HCT116 (cell line): ENCODE measurements at regions of chr1 and their contacts with region 1.

Region 1: DNA sequence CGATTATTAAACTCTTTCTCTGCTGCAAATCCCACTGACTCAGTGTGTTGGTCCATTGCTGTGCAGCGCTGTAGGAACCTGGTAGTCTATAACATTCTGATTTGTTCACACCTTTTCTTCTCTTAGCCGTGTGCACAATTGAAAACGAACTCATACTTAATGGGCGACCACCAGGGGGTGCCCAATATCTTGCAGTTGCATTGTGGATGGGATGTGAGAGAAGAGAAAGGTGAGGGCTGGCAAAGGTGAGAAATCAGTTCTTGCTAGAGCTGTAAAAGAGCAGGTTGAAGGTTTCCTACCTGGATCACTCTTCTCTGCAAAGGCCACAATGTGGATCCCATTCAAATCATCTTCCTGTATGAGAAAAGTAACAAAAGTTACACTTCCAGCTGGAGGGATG is 51.0 kb downstream of the CASQ2 start:
- DNase-seq: peak; percentile 32
- ATAC-seq: peak; percentile 68
- H3K4me3 ChIP-seq: no peak overlapping the region
- H3K27ac ChIP-seq: no peak overlapping the region
- H3K4me1 ChIP-seq: peaks cover 7 to 15% of the 10 kb centered on the region in 2 experiments; a peak in 2 of 4 replicates
- H3K27me3 ChIP-seq: no peaks in the 10 kb centered on the region
- CTCF ChIP-seq: peak; percentile 31 to 58 (median 48); a peak in 4 of 6 replicates
- POLR2A ChIP-seq: no peak
- RAD21 ChIP-seq: peak; percentile 66

Region 2: GRCh38 chr1:115697619-115698018 is 19.9 kb before region 1 on chr1:
- CTCF ChIA-PET with region 1: no interaction called
- POLR2A ChIA-PET with region 1: no interaction called
- RAD21 ChIA-PET with region 1: no interaction called
- intact Hi-C with region 1: no loop called
- DNase-seq: no peak
- ATAC-seq: no peak
- H3K4me3 ChIP-seq: no peak overlapping the region
- H3K27ac ChIP-seq: no peak overlapping the region
- H3K4me1 ChIP-seq: no peaks in the 10 kb centered on the region
- H3K27me3 ChIP-seq: no peaks in the 10 kb centered on the region
- CTCF ChIP-seq: no peak
- POLR2A ChIP-seq: no peak
- RAD21 ChIP-seq: no peak

Region 3: DNA sequence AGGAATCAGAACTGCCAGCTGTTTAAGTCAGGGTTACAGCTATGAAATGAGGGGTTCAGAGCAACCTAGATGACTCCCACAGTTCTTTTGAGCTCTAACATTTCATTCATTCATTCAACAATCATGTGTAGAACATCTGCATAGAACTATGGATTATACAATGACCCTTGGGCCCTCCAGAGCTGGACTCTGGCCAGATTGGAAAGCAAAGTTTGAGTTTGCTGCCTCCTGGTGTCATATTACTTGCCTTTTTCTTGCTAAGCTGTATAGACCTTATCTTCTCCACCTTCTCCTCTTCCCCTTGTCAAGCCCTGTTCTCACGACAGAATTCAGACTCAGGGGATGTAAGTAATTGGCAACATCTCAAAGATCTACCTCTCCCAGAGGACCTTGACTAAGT is 47.0 kb after region 1 on chr1:
- CTCF ChIA-PET with region 1: interaction called, 10 read pairs
- POLR2A ChIA-PET with region 1: no interaction called
- RAD21 ChIA-PET with region 1: interaction called in 1 of 2 experiments, 4 read pairs
- intact Hi-C with region 1: no loop called
- DNase-seq: peak; percentile 34
- ATAC-seq: peak; percentile 78
- H3K4me3 ChIP-seq: no peak overlapping the region
- H3K27ac ChIP-seq: no peak overlapping the region
- H3K4me1 ChIP-seq: peaks cover 0 to 5% of the 10 kb centered on the region in 2 experiments; a peak in 2 of 4 replicates
- H3K27me3 ChIP-seq: no peaks in the 10 kb centered on the region
- CTCF ChIP-seq: peak; percentile 35 to 68 (median 55); a peak in 5 of 6 replicates
- POLR2A ChIP-seq: no peak
- RAD21 ChIP-seq: peak; percentile 82